ENCODE measurements at regions of chr11 and their contacts with region 1.

Region 1: DNA sequence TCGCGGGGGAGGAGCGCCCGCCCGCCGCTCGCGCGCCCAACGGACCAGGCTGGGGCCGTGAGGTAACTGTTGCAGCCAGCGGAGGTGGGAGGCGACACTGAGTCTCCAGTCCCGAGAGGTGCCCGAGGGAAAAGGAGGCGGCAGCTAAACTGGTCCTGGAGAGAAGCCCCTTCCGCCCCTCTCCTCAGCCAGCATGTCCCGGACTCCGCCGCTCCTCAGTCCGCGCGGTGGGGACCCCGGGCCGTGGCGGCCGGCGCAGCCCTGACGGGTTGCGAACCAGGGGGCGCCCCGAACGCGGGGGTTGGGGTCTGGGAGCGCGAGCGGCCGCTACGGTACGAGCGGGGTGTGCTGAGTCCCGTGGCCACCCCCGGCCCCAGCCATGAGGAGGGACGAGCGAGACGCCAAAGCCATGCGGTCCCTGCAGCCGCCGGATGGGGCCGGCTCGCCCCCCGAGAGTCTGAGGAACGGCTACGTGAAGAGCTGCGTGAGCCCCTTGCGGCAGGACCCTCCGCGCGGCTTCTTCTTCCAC is at the start of gene PDE3B:
- DNase-seq: peak; percentile 87
- ATAC-seq: peak; percentile 78
- H3K4me3 Mint-ChIP-seq: peak within 1 kb of the TSS; percentile 79
- H3K27ac Mint-ChIP-seq: peak within 1 kb of the TSS; percentile 90
- H3K4me1 Mint-ChIP-seq: peaks cover 41% of the 10 kb centered on the region
- H3K27me3 Mint-ChIP-seq: no peaks in the 10 kb centered on the region
- CTCF ChIP-seq: no peak
- total RNA-seq, gene PDE3B: 42.3 to 43.1 TPM

Region 2: DNA sequence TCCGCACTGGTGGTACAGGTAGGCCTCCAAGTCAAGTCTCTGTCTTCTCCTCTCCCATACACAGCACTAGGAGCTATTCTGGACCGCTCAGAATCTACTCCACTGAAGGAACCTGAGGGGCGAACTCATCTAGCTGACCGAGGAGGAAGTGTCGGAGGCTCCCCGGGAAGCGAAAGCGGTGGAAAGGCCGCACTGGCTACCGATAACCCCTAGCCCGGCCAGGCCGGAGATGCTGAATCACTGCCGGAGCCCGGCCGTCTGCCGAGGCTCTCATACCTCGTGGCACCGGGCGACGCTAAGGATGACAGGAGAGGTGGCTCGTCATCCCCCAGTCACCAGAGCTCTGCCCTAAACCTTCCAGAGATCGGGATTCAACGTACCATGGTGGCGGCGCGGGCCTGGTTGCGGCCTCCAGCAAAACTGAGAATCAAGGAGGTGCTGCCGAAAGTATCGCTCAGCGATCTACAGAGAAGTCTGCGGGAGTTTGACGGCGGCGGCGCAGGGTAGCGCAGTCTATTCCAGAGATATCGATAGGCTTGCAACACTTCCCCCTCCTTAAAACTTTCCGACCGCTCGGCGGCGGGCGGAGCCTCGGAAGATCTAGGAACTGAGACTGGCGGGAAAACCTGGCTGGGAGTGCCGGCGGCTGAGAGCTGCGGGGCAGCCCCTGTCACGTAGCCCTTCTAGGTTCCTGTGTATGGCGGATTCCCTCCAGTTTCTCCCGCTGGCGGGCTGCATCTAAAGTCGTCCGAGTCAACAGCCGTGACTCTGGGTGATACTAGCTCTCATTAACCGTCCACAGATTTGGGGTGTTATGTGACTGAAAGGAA is 123.6 kb before region 1 on chr11 and contains the start of gene PSMA1:
- CTCF ChIA-PET with region 1: no interaction called
- POLR2A ChIA-PET with region 1: interaction called, 26 read pairs
- intact Hi-C with region 1: no loop called
- DNase-seq: peak; percentile 99
- ATAC-seq: peak; percentile 89
- H3K4me3 Mint-ChIP-seq: peak within 1 kb of the TSS; percentile 93
- H3K27ac Mint-ChIP-seq: peak within 1 kb of the TSS; percentile 97
- H3K4me1 Mint-ChIP-seq: peaks cover 26% of the 10 kb centered on the region
- H3K27me3 Mint-ChIP-seq: no peaks in the 10 kb centered on the region
- CTCF ChIP-seq: no peak
- total RNA-seq, gene PSMA1: 329 to 338 TPM

Region 3: DNA sequence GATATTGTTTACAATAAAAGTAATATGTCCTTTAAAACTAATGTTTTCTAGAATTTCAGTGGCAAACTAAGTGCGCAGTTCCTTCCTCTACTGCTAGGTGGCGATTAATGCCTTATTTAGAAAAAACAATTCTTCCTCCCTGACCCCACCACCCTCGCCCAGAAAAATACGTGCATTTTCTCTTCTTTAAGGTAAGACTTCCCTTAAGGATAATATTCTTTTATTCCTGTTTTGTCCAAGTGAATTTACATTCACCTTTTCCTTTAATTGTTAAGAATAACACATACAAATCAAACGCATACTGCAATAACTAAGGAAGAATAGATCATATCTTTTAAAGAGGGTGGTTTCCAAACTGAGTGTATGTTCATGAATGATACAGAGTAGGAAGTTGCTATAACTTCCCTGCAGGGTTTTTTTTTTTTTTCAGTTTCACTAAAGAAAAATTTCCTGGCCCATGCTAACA is 106.6 kb before region 1 on chr11:
- CTCF ChIA-PET with region 1: interaction called, 5 read pairs
- POLR2A ChIA-PET with region 1: interaction called, 9 read pairs
- intact Hi-C with region 1: loop called (anchors 5 kb)
- DNase-seq: peak; percentile 70
- ATAC-seq: peak; percentile 83
- H3K4me3 Mint-ChIP-seq: peak overlapping the region; percentile 64
- H3K27ac Mint-ChIP-seq: peak overlapping the region; percentile 92
- H3K4me1 Mint-ChIP-seq: peaks cover 44% of the 10 kb centered on the region
- H3K27me3 Mint-ChIP-seq: no peaks in the 10 kb centered on the region
- CTCF ChIP-seq: peak; percentile 90

Region 4: GRCh38 chr11:14578541-14578956 is 65.2 kb before region 1 on chr11:
- CTCF ChIA-PET with region 1: interaction called, 6 read pairs
- POLR2A ChIA-PET with region 1: interaction called, 13 read pairs
- intact Hi-C with region 1: no loop called
- DNase-seq: peak; percentile 73
- ATAC-seq: peak; percentile 92
- H3K4me3 Mint-ChIP-seq: peak overlapping the region; percentile 14
- H3K27ac Mint-ChIP-seq: peak overlapping the region; percentile 77
- H3K4me1 Mint-ChIP-seq: peaks cover 59% of the 10 kb centered on the region
- H3K27me3 Mint-ChIP-seq: no peaks in the 10 kb centered on the region
- CTCF ChIP-seq: no peak

Region 5: GRCh38 chr11:14764579-14765527 is 121.1 kb after region 1 on chr11:
- CTCF ChIA-PET with region 1: interaction called, 18 read pairs
- POLR2A ChIA-PET with region 1: interaction called, 64 read pairs
- intact Hi-C with region 1: loop called (anchors 2 kb)
- DNase-seq: peak; percentile 66
- ATAC-seq: peak; percentile 64
- H3K4me3 Mint-ChIP-seq: peak overlapping the region; percentile 64
- H3K27ac Mint-ChIP-seq: no peak overlapping the region
- H3K4me1 Mint-ChIP-seq: peaks cover 47% of the 10 kb centered on the region
- H3K27me3 Mint-ChIP-seq: no peaks in the 10 kb centered on the region
- CTCF ChIP-seq: no peak

Region 6: DNA sequence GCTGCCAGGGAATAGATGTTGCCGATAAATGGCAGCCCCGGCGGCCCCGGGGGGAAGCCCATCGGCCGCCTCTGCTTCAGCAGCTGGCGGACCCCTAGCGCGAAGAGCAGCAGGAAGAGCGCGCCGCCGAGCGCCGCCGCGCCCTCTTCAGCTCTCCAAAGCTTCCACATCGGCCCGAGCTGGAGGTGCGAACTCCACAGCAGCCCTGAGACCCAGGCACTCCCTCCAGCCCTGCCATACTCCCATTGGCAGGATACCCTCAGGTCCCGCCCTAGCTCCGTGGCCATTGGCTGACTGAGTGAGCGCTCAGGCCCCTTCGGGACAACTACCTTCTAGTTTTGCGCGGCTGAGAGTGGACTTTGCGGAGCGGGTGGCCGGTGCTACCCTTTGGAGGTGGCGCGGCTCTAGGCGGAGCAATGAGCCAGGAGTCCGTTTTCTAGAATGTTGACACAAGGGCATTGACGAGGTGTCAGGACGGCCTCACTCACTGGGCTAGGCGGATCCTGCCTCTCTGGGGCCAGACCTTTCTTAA is 248.3 kb after region 1 on chr11 and contains the start of gene CYP2R1:
- CTCF ChIA-PET with region 1: interaction called, 11 read pairs
- POLR2A ChIA-PET with region 1: interaction called, 10 read pairs
- intact Hi-C with region 1: no loop called
- DNase-seq: peak; percentile 94
- ATAC-seq: peak; percentile 84
- H3K4me3 Mint-ChIP-seq: peak within 1 kb of the TSS; percentile 91
- H3K27ac Mint-ChIP-seq: peak within 1 kb of the TSS; percentile 100
- H3K4me1 Mint-ChIP-seq: peaks cover 54% of the 10 kb centered on the region
- H3K27me3 Mint-ChIP-seq: no peaks in the 10 kb centered on the region
- CTCF ChIP-seq: no peak
- total RNA-seq, gene CYP2R1: 12.9 to 13.9 TPM